ENCODE measurements at regions of chr13 and their contacts with region 1.

Region 1: DNA sequence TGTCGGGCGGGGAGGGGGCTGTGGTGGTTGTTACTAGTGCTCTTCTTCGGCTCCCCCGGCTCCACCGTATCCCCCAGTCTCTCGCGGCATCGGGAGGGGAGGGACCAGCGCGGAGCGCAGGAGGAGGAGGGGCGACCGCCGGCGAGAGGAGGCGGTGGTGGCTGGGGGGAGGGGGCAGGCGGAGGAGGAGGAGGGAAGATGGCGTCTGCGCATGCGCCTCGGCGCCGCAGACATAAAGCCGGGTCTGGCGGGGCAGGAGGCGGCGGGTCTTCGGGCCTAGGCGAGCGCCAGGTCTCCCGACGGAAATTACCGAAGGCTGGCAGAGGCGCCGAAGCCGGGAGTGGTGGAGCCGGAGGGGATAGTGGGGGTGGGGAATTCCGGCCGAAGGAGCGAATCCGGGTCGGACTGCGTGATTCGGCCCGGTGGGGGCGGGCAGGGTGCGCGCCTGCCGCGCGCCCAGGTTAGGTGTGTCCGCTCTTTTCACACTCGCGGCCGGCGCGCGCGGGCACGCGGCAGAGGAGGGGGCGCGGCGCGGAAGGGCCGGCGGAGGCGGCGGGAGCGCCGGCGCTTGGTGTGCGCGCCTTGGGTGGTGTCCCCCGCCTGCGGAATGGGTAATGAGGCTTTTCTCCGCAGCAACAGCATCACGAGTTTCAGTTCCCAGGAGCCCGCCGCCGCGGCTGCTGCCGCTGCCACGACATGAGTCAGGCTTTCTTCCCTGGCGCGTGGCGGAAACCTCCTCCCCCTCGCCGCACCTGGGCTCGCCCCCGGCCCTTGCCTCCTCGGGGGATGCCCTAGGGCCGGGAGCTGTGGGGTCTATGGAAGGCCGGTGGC is 1.3 kb upstream of the TSC22D1 start:
- DNase-seq: peak; percentile 96
- ATAC-seq: peak; percentile 79
- H3K4me3 Mint-ChIP-seq: peak overlapping the region; percentile 91
- H3K27ac Mint-ChIP-seq: peak overlapping the region; percentile 92
- H3K4me1 Mint-ChIP-seq: peaks cover 37% of the 10 kb centered on the region
- H3K27me3 Mint-ChIP-seq: no peaks in the 10 kb centered on the region
- CTCF ChIP-seq: no peak

Region 2: DNA sequence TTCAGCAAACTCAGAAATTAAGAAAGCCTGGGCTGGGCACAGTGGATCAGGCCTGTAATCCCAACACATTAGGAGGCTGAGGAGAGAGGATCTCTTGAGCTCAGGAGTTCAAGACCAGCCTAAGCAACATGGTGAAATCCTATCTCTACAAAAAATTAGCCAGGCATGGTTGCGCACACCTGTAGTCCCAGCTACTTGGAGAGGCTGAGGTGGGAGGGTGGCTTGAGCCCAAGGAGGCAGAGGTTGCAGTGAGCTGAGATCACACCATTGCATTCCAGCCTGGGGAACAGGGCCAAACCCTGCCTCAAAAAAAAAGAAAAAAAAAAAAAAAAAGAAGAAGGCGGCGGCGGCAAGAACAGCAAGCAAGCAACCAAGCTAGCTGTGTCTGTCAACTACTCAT is 28.0 kb before region 1 on chr13:
- CTCF ChIA-PET with region 1: no interaction called
- POLR2A ChIA-PET with region 1: no interaction called
- intact Hi-C with region 1: no loop called
- DNase-seq: no peak
- ATAC-seq: no peak
- H3K4me3 Mint-ChIP-seq: no peak overlapping the region
- H3K27ac Mint-ChIP-seq: no peak overlapping the region
- H3K4me1 Mint-ChIP-seq: no peaks in the 10 kb centered on the region
- H3K27me3 Mint-ChIP-seq: no peaks in the 10 kb centered on the region
- CTCF ChIP-seq: no peak

Region 3: GRCh38 chr13:44565881-44566280 is 11.6 kb before region 1 on chr13:
- CTCF ChIA-PET with region 1: interaction called, 13 read pairs
- POLR2A ChIA-PET with region 1: interaction called, 3 read pairs
- intact Hi-C with region 1: no loop called
- DNase-seq: no peak
- ATAC-seq: no peak
- H3K4me3 Mint-ChIP-seq: no peak overlapping the region
- H3K27ac Mint-ChIP-seq: no peak overlapping the region
- H3K4me1 Mint-ChIP-seq: peaks cover 37% of the 10 kb centered on the region
- H3K27me3 Mint-ChIP-seq: no peaks in the 10 kb centered on the region
- CTCF ChIP-seq: no peak

Region 4: DNA sequence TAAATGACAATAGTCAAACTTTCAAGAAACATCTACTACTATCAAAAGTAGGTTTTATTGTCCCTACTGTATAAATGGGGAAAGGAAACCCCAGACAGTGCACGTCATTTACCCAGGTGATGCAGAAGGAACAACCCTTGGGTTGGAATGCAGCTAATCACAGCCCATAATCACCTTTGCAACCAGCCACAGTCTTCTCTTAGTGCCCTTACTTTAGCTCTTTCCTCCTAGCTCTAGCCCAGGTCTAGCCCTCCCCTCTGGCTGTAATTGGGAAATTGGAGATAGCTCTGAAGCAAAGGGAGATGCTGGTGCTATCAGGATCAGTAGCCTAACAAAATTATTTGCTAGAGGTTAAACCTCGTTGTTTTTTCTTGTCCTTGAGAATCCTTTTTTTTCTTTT is 24.1 kb after region 1 on chr13:
- CTCF ChIA-PET with region 1: no interaction called
- POLR2A ChIA-PET with region 1: no interaction called
- intact Hi-C with region 1: no loop called
- DNase-seq: no peak
- ATAC-seq: no peak
- H3K4me3 Mint-ChIP-seq: no peak overlapping the region
- H3K27ac Mint-ChIP-seq: no peak overlapping the region
- H3K4me1 Mint-ChIP-seq: no peaks in the 10 kb centered on the region
- H3K27me3 Mint-ChIP-seq: no peaks in the 10 kb centered on the region
- CTCF ChIP-seq: no peak